ENCODE measurements at regions of chr10 and their contacts with region 1.

Region 1: GRCh38 chr10:120942806-120943413 is 91.7 kb downstream of the WDR11 start:
- DNase-seq: peak; percentile 67
- H3K4me3 ChIP-seq: no peak overlapping the region
- H3K27ac ChIP-seq: no peak overlapping the region
- H3K4me1 ChIP-seq: peaks cover 15% of the 10 kb centered on the region
- H3K27me3 ChIP-seq: no peaks in the 10 kb centered on the region
- CTCF ChIP-seq: peak; percentile 80 to 92

Region 2: DNA sequence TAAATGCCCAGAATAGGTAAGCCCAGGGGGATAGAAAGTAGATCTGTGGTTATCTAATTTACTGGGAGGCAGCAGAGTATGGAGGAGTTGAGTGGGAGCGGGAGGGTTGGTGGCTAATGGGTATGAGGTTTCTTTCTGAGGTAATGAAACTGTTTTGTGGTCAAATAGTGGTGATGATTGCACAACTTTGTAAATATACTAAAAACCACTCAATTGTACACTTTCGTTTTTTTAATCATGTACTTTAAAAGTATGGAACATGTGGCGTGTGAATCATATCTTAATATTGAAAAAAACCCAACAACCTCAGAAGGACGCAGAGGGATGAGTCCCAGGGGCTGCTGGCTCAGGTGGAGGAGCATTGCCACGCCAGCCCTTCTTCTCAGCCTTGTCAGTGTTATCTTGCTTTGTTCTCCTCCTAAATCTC is 26.3 kb after region 1 on chr10:
- CTCF ChIA-PET with region 1: no interaction called
- dilution Hi-C with region 1: no loop called
- in situ Hi-C with region 1: no loop called
- intact Hi-C with region 1: no loop called
- DNase-seq: peak; percentile 88
- H3K4me3 ChIP-seq: no peak overlapping the region
- H3K27ac ChIP-seq: no peak overlapping the region
- H3K4me1 ChIP-seq: peaks cover 14% of the 10 kb centered on the region
- H3K27me3 ChIP-seq: peaks cover 32% of the 10 kb centered on the region
- CTCF ChIP-seq: no peak

Region 3: DNA sequence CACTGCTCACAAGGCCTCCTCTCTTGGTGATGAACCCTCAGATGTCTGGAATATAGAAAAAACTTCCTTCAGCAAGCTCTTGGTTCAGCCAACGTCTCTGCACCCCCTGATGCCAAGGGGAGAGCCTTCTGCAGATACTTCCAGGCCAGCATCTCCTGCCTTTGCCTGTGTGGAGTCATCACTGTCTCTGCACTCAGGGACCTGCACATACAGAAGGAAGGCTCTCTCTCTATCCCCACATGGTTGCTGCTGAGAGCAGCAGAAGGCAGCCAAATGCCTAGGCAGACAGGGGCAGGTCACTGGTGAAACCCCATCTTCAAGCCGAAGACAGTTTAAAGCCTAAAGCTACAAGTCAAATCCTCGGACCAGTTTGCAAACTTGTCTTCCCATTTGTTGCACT is 45.8 kb after region 1 on chr10:
- CTCF ChIA-PET with region 1: no interaction called
- dilution Hi-C with region 1: no loop called
- in situ Hi-C with region 1: no loop called
- intact Hi-C with region 1: no loop called
- DNase-seq: no peak
- H3K4me3 ChIP-seq: no peak overlapping the region
- H3K27ac ChIP-seq: no peak overlapping the region
- H3K4me1 ChIP-seq: no peaks in the 10 kb centered on the region
- H3K27me3 ChIP-seq: no peaks in the 10 kb centered on the region
- CTCF ChIP-seq: no peak

Region 4: GRCh38 chr10:121027371-121027770 is 84.5 kb after region 1 on chr10:
- CTCF ChIA-PET with region 1: no interaction called
- dilution Hi-C with region 1: no loop called
- in situ Hi-C with region 1: no loop called
- intact Hi-C with region 1: no loop called
- DNase-seq: no peak
- H3K4me3 ChIP-seq: no peak overlapping the region
- H3K27ac ChIP-seq: no peak overlapping the region
- H3K4me1 ChIP-seq: no peaks in the 10 kb centered on the region
- H3K27me3 ChIP-seq: peaks cover under 1% of the 10 kb centered on the region
- CTCF ChIP-seq: no peak

Region 5: DNA sequence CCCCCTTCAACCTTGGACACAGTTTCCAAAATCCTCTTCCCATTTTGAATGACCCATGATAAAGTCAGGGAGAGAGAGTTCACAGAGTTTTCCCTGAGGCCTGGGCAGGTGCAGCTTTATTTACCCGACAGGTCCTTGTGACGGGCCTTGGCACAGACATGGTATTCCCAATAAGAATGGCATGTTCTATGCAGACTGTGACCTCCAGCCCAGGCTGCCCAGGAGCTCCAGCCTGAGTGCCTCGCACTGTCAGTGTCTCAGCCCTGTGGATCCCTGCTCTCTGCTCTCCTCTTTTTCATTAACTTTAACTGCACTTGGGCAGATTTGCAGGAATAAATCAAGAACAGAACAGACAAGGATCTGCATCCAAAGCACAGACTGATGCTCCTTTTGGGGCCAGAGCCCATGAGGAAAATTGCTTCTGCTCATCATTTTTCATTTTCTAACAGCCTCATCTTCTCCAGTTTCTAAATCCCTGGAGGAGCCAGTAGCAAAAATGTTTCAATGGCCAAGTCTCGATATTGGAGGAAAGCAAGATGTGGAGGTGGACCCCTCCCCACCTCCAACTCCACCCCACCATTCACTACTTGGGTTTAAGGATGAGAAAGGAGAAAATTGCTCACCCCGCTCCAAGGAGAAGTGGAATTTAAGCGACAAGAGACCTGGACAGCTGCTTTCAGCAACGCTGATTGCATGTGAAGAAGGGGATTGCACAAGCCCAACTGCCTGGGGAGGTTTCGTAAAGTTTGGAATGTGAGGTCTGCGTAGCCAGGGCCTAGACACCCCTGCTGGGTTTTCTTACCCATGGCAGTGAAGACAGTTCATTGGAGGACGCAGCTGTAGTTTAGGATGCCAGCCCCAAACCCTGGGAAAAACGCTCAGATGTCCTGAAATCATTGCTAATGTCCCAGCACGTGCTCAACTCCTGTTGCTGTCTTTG is 134.1 kb after region 1 on chr10:
- CTCF ChIA-PET with region 1: no interaction called
- dilution Hi-C with region 1: no loop called
- in situ Hi-C with region 1: no loop called
- intact Hi-C with region 1: loop called (anchors 2 kb)
- DNase-seq: peak; percentile 78
- H3K4me3 ChIP-seq: no peak overlapping the region
- H3K27ac ChIP-seq: peak overlapping the region; percentile 95
- H3K4me1 ChIP-seq: peaks cover 38% of the 10 kb centered on the region
- H3K27me3 ChIP-seq: no peaks in the 10 kb centered on the region
- CTCF ChIP-seq: peak in 1 of 2 donors; percentile 3

Region 6: GRCh38 chr10:121324678-121325213 is 381.8 kb after region 1 on chr10:
- CTCF ChIA-PET with region 1: no interaction called
- dilution Hi-C with region 1: no loop called
- in situ Hi-C with region 1: no loop called
- intact Hi-C with region 1: loop called (anchors 10 kb)
- DNase-seq: peak; percentile 70
- H3K4me3 ChIP-seq: no peak overlapping the region
- H3K27ac ChIP-seq: peak overlapping the region; percentile 81
- H3K4me1 ChIP-seq: peaks cover 50% of the 10 kb centered on the region
- H3K27me3 ChIP-seq: no peaks in the 10 kb centered on the region
- CTCF ChIP-seq: no peak

Region 7: DNA sequence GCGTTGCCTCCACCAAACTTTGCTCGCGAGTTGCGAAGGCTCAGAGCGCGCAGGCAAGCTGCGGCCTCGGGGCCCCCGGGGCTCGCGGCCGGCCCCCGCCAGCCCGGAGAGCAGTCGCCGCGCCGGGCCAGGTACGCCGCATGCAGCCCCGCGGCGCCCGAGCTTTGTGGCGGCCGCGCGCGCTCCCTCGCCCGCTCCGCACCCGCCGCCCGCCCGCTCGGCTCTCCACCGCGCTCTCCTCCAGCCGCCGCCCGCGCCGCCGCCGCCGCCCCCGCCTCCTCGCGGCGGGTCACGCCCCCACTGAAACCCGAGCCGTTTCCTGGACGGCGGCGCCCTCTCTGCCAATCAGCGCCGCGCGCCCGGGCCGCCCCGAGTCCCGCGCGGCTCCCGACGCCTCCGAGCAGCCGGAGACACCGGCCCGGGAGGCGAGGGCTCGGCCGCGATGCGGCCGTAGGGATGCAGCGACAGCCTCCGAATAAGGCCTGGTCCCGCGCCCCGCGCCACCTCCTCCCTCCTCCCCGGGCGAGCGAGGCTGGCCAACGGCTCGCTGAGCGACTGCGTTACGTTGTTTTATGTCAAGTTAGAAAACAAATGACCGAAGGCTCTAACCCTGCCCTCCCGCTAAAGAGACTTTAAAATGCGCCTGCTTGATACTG is 655.4 kb after region 1 on chr10 and contains the start of gene FGFR2:
- CTCF ChIA-PET with region 1: no interaction called
- dilution Hi-C with region 1: no loop called
- in situ Hi-C with region 1: loop called in 1 of 2 experiments (anchors 25 kb)
- intact Hi-C with region 1: loop called (anchors 2 kb)
- DNase-seq: peak; percentile 85
- H3K4me3 ChIP-seq: peak within 1 kb of the TSS; percentile 79 to 93 (median 83)
- H3K27ac ChIP-seq: peak within 1 kb of the TSS; percentile 87
- H3K4me1 ChIP-seq: peaks cover 22% of the 10 kb centered on the region
- H3K27me3 ChIP-seq: no peaks in the 10 kb centered on the region
- CTCF ChIP-seq: no peak
- total RNA-seq, gene FGFR2: 22.0 to 86.9 TPM

Region 8: GRCh38 chr10:121734589-121735045 is 791.7 kb after region 1 on chr10:
- CTCF ChIA-PET with region 1: no interaction called
- dilution Hi-C with region 1: loop called (anchors 25 kb)
- in situ Hi-C with region 1: loop called (anchors 5 to 10 kb)
- intact Hi-C with region 1: loop called (anchors 1 kb)
- DNase-seq: peak; percentile 10
- H3K4me3 ChIP-seq: no peak overlapping the region
- H3K27ac ChIP-seq: no peak overlapping the region
- H3K4me1 ChIP-seq: no peaks in the 10 kb centered on the region
- H3K27me3 ChIP-seq: no peaks in the 10 kb centered on the region
- CTCF ChIP-seq: peak; percentile 58 to 75

Region 9: GRCh38 chr10:121900443-121901174 is 957.7 kb after region 1 on chr10:
- CTCF ChIA-PET with region 1: interaction called, 3 read pairs
- dilution Hi-C with region 1: loop called (anchors 25 kb)
- in situ Hi-C with region 1: loop called in 1 of 2 experiments (anchors 25 kb)
- intact Hi-C with region 1: loop called (anchors 1 kb)
- DNase-seq: peak; percentile 45
- H3K4me3 ChIP-seq: no peak overlapping the region
- H3K27ac ChIP-seq: no peak overlapping the region
- H3K4me1 ChIP-seq: no peaks in the 10 kb centered on the region
- H3K27me3 ChIP-seq: no peaks in the 10 kb centered on the region
- CTCF ChIP-seq: peak; percentile 68

Measured in mammary epithelial cell (primary cell).